ENCODE measurements at regions of chr10 and their contacts with region 1.

Region 1: DNA sequence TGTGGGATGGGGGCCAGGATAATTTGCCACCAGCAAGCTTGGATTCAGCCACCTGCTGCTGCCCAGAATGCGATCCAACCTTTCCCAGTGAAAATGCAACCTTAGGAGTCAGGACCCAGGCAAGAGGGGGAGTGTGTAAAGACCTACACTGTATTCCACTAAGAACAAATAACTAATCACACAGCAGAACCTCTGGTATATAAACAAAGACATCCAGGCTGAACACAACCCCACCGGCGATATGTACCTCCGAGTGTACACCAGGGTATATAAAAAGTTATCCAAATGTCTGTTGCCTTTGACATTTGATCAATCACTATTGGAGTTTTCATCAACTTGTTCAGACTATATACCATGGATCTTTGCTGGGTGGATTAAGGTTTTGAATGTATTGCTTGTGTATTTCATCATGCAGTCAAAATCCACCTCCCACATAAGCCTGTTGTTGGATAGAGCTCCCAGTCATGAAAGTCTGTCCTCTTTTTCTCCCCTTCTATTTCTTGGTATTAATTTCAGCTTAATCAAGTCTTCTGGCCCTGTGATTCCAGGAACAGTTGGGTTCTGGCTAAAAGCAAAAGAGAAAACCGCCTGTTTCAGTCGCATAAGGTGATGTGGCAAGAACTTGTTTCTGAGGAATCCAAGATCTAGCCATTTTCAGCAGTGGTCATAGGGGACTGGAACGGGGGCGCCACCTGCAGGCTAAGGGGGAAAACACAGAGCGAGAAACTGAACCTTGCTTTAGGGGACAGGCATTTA is 290.7 kb downstream of the CCDC3 start:
- DNase-seq: peak; percentile 64 to 76
- ATAC-seq: peak; percentile 35 to 73 (median 62)
- H3K4me3 ChIP-seq: no peak overlapping the region
- H3K27ac ChIP-seq: peak overlapping the region in 1 of 10 donors; percentile 5
- H3K4me1 ChIP-seq: peaks cover 12 to 48% (median 35%) of the 10 kb centered on the region in 9 donors
- H3K27me3 ChIP-seq: no peaks in the 10 kb centered on the region
- CTCF ChIP-seq: peak; percentile 86 to 96 (median 92)

Region 2: DNA sequence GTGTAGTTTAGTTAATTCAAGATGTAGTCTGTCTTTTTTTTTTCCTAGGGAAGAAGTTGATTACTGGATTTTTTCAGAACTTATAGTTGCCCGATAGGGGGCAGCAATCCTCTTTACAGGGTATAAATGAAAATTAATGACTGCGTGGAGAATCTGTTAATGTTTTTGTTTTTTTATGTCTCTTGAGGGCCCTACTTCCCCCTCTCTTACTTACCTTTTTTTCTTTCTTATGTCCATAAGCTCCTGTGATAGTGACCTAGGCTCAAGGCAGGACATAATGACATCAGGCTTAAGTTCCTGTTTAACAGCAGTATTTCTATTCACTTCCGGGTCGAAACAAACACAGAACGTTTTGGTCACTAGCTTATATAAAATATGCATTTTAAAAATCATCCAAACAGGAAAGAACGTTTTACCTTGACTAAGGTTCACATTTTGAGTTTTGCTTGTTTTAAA is 496.0 kb before region 1 on chr10:
- intact Hi-C with region 1: loop called in 5 of 10 experiments (anchors 5 kb)
- DNase-seq: peak in 1 of 2 donors; percentile 40
- ATAC-seq: peak in 7 of 8 donors; percentile 23 to 53 (median 33)
- H3K4me3 ChIP-seq: peak overlapping the region in 4 of 10 donors; percentile 11 to 30 (median 20)
- H3K27ac ChIP-seq: peak overlapping the region in 4 of 10 donors; percentile 14 to 65 (median 32)
- H3K4me1 ChIP-seq: peaks cover 0 to 28% (median 11%) of the 10 kb centered on the region in 9 donors
- H3K27me3 ChIP-seq: no peaks in the 10 kb centered on the region
- CTCF ChIP-seq: peak; percentile 34 to 80 (median 70)

Region 3: DNA sequence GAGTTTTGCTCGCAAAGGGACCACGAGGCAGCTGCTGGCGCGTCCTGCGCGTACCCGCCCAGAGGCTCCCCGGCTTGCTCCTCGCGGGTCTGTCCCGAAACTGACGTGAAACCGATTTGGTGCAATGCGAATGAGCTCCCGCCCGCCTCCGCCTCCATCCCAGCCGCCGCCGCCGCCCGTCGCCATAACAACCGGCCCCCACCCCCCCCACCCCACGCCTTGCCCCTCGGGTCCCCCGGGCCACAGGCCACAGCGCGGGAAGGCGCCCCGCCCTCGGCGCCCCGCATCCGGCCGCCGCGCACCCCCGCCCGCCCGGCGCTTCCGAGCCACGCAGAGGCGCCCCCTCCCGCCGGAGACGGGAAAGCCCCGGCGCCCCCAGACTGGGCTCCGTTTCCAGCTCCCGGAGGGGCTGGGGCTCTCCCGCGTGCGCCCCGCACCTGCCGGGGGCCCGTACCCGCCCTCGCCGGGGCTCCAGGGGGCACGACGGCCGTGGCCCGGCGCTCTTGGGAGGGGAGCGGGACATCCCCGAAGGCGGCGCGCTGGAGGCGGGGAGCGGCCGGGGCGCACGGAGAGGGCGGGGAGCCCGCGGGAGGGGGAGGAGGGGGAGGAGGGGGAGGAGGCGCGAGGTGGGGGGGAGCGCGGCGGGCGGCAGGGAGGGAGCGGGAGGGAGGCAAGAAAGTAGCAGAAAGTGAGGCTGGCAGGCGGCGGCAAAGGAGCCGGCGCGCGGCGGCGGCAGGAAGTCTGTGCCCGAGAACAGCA is 361.7 kb before region 1 on chr10 and contains the start of gene CAMK1D:
- intact Hi-C with region 1: loop called in 2 of 10 experiments (anchors 10 kb)
- DNase-seq: peak; percentile 69 to 83
- ATAC-seq: peak; percentile 65 to 85 (median 80)
- H3K4me3 ChIP-seq: peak within 1 kb of the TSS; percentile 62 to 93 (median 84)
- H3K27ac ChIP-seq: peak within 1 kb of the TSS; percentile 7 to 93 (median 78)
- H3K4me1 ChIP-seq: peaks cover 4 to 26% (median 16%) of the 10 kb centered on the region in 9 donors
- H3K27me3 ChIP-seq: peaks cover 0 to 6% (median 4%) of the 10 kb centered on the region in 7 donors
- CTCF ChIP-seq: peak in 7 of 9 donors; percentile 7 to 53 (median 41)
- total RNA-seq, gene CAMK1D: 2.0 to 17.7 (median 2.9) TPM

Region 4: GRCh38 chr10:12663863-12664262 is 46.9 kb before region 1 on chr10:
- intact Hi-C with region 1: loop called in 2 of 10 experiments (anchors 5 kb)
- DNase-seq: no peak
- ATAC-seq: no peak
- H3K4me3 ChIP-seq: no peak overlapping the region
- H3K27ac ChIP-seq: no peak overlapping the region
- H3K4me1 ChIP-seq: peaks cover 0 to 8% (median 0%) of the 10 kb centered on the region in 9 donors
- H3K27me3 ChIP-seq: no peaks in the 10 kb centered on the region
- CTCF ChIP-seq: no peak

Region 5: GRCh38 chr10:13056456-13057077 is 345.8 kb after region 1 on chr10:
- intact Hi-C with region 1: loop called in 1 of 10 experiments (anchors 10 kb)
- DNase-seq: no peak
- ATAC-seq: no peak
- H3K4me3 ChIP-seq: no peak overlapping the region
- H3K27ac ChIP-seq: no peak overlapping the region
- H3K4me1 ChIP-seq: no peaks in the 10 kb centered on the region
- H3K27me3 ChIP-seq: peaks cover 0 to 17% (median under 1%) of the 10 kb centered on the region in 7 donors
- CTCF ChIP-seq: peak in 7 of 9 donors; percentile 26 to 50 (median 38)

Region 6: GRCh38 chr10:13099666-13100348 is 389.0 kb after region 1 on chr10 and contains the start of gene OPTN:
- intact Hi-C with region 1: loop called in 1 of 10 experiments (anchors 10 kb)
- DNase-seq: peak; percentile 80 to 84
- ATAC-seq: peak; percentile 89 to 95 (median 93)
- H3K4me3 ChIP-seq: peak within 1 kb of the TSS; percentile 83 to 99 (median 96)
- H3K27ac ChIP-seq: peak within 1 kb of the TSS; percentile 87 to 99 (median 97)
- H3K4me1 ChIP-seq: peaks cover 2 to 43% (median 39%) of the 10 kb centered on the region in 9 donors
- H3K27me3 ChIP-seq: no peaks in the 10 kb centered on the region
- CTCF ChIP-seq: peak; percentile 38 to 85 (median 67)
- total RNA-seq, gene OPTN: 111 to 218 (median 133) TPM

Measured in heart right ventricle (tissue), 16 donors.